ENCODE measurements at regions of chr12 and their contacts with region 1.

Region 1: GRCh38 chr12:43882578-43883178 is 46.8 kb downstream of the TMEM117 start:
- DNase-seq: peak; percentile 47
- ATAC-seq: peak; percentile 75
- H3K4me3 Mint-ChIP-seq: no peak overlapping the region
- H3K27ac Mint-ChIP-seq: no peak overlapping the region
- H3K4me1 Mint-ChIP-seq: no peaks in the 10 kb centered on the region
- H3K27me3 Mint-ChIP-seq: no peaks in the 10 kb centered on the region

Region 2: GRCh38 chr12:43444940-43445564 is 437.6 kb before region 1 on chr12:
- CTCF ChIA-PET with region 1: interaction called, 26 read pairs
- DNase-seq: peak; percentile 55
- ATAC-seq: no peak
- H3K4me3 Mint-ChIP-seq: no peak overlapping the region
- H3K27ac Mint-ChIP-seq: no peak overlapping the region
- H3K4me1 Mint-ChIP-seq: peaks cover 2% of the 10 kb centered on the region
- H3K27me3 Mint-ChIP-seq: no peaks in the 10 kb centered on the region

Region 3: GRCh38 chr12:43776498-43776897 is 106.2 kb before region 1 on chr12:
- CTCF ChIA-PET with region 1: interaction called, 14 read pairs
- DNase-seq: no peak
- ATAC-seq: no peak
- H3K4me3 Mint-ChIP-seq: no peak overlapping the region
- H3K27ac Mint-ChIP-seq: no peak overlapping the region
- H3K4me1 Mint-ChIP-seq: no peaks in the 10 kb centered on the region
- H3K27me3 Mint-ChIP-seq: no peaks in the 10 kb centered on the region

Region 4: GRCh38 chr12:43805860-43806736 is 76.6 kb before region 1 on chr12 and contains the start of gene TWF1:
- CTCF ChIA-PET with region 1: interaction called, 10 read pairs
- DNase-seq: peak; percentile 91
- ATAC-seq: peak; percentile 97
- H3K4me3 Mint-ChIP-seq: peak within 1 kb of the TSS; percentile 87
- H3K27ac Mint-ChIP-seq: peak within 1 kb of the TSS; percentile 100
- H3K4me1 Mint-ChIP-seq: peaks cover 24% of the 10 kb centered on the region
- H3K27me3 Mint-ChIP-seq: peaks cover under 1% of the 10 kb centered on the region
- total RNA-seq, gene TWF1: 25.2 to 27.4 TPM

Measured in activated CD8-positive, alpha-beta memory T cell treated with anti-CD3 and anti-CD28 coated beads, Interleukin-2, amount 10 ng/mL, durations not matched to agents 7 days and 5 days (primary cell).